ENCODE measurements at regions of chr4 and their contacts with region 1.

Region 1: GRCh38 chr4:12633053-12633651 is 851.0 kb downstream of the RAB28 start:
- DNase-seq: peak; percentile 59 to 96 (median 82)

Region 2: GRCh38 chr4:11765849-11766453 is 867.2 kb before region 1 on chr4:
- intact Hi-C with region 1: loop called (anchors 5 kb)
- DNase-seq: peak in 2 of 10 donors; percentile 16 to 70

Region 3: GRCh38 chr4:11805842-11806241 is 827.3 kb before region 1 on chr4:
- intact Hi-C with region 1: loop called (anchors 10 kb)
- DNase-seq: no peak

Region 4: GRCh38 chr4:12041828-12042227 is 591.3 kb before region 1 on chr4:
- intact Hi-C with region 1: loop called (anchors 5 kb)
- DNase-seq: no peak

Region 5: GRCh38 chr4:12911750-12912358 is 278.7 kb after region 1 on chr4:
- intact Hi-C with region 1: no loop called
- DNase-seq: no peak